ENCODE measurements at regions of chr2 and their contacts with region 1.

Region 1: GRCh38 chr2:222714361-222715241 is 43.1 kb downstream of the MOGAT1 start:
- DNase-seq: peak in 4 of 5 donors; percentile 46 to 69 (median 60)
- ATAC-seq: peak; percentile 89 to 96 (median 94)
- H3K4me3 ChIP-seq: no peak overlapping the region
- H3K27ac ChIP-seq: peak overlapping the region; percentile 39 to 83 (median 70)
- H3K4me1 ChIP-seq: peaks cover 0 to 23% (median 14%) of the 10 kb centered on the region in 12 donors
- H3K27me3 ChIP-seq: no peaks in the 10 kb centered on the region
- CTCF ChIP-seq: no peak
- POLR2A ChIP-seq: no peak

Region 2: GRCh38 chr2:222483513-222484039 is 231.0 kb before region 1 on chr2:
- intact Hi-C with region 1: no loop called
- DNase-seq: peak in 1 of 5 donors; percentile 31
- ATAC-seq: no peak
- H3K4me3 ChIP-seq: no peak overlapping the region
- H3K27ac ChIP-seq: no peak overlapping the region
- H3K4me1 ChIP-seq: peaks cover 0 to 27% (median 5%) of the 10 kb centered on the region in 12 donors
- H3K27me3 ChIP-seq: peaks cover 0 to 6% (median 0%) of the 10 kb centered on the region in 9 donors
- CTCF ChIP-seq: no peak
- POLR2A ChIP-seq: no peak

Region 3: DNA sequence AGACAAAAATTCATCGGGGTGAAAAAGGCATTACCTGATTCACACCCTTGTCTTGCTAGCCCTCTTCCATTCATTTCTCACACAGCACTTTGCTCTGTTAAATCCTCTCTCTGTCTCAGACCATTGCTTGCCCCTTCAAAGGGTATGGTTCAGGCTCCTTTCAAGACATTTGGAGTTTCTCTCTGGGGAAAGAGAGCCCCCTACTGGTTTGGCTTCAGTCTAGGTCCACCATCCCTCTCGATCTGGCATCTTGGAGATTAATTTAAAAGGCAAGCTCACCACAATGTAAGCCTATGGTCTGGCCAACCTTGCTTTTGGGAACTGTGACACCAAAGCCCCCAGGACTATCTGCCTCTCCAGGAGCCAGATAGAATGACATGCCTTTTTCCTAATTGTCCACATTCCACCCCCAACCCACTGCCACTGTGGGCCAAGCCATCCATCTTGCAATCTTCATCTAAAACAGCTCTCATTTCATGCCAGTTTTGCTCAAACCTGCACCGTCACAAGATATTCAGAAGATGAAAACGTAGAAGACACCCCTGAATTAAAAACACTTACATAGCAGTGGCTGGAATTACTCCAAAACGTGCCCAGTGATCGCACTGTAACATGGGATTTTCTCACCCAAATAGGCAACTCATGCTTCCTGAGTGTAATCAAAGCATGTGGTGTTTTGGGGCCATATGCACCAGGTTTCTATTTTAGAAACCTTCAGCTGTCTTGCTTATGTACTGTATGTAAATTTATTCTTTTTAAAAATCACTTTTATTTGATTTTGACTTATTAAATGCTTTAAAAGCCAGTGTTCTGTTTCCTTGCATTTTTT is 152.6 kb before region 1 on chr2:
- intact Hi-C with region 1: no loop called
- DNase-seq: peak in 2 of 5 donors; percentile 29 to 40
- ATAC-seq: peak; percentile 38 to 83 (median 80)
- H3K4me3 ChIP-seq: no peak overlapping the region
- H3K27ac ChIP-seq: no peak overlapping the region
- H3K4me1 ChIP-seq: peaks cover 0 to 11% (median 0%) of the 10 kb centered on the region in 12 donors
- H3K27me3 ChIP-seq: peaks cover 0 to 2% (median 0%) of the 10 kb centered on the region in 9 donors
- CTCF ChIP-seq: peak; percentile 52 to 68 (median 58)
- POLR2A ChIP-seq: no peak

Region 4: DNA sequence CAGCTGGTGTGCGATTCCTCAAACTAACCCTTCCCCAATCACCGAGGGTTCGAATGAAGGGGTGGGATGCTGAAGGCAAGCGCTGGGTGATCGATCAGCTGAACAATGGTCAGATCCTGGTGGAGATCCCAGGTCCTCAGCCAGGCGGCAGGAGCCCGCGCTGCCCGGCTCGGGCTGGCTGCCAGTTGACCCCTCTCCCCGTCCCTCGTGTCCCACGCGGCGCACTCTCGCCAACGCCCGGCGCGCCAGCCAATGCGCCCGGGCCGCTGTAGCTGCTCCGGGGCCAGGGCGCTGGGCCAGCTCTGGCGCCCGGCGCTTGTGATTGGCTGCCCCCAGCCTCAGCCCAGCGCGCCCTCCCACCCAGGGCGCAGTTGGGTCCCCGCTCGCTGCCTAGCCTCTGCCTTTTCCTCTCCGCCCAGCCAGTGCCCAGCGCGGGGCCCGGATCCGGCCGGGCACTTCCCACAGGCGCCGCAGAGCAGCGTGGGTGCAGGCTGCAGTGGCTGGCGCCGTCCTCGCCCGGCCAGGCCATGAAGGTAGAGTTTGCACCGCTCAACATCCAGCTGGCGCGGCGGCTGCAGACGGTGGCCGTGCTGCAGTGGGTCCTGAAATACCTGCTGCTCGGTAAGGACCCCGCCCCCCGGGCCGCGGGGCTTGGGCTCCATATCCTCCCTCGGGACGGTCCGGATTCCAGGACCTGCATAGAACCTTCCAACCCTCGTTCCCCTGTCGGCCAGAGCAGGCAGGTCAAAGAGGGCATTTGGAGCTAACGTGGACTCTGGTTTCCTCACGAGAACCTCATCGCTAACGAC is 43.1 kb before region 1 on chr2 and contains the start of gene MOGAT1:
- intact Hi-C with region 1: no loop called
- DNase-seq: peak; percentile 22 to 76 (median 59)
- ATAC-seq: peak; percentile 66 to 91 (median 84)
- H3K4me3 ChIP-seq: peak within 1 kb of the TSS in 11 of 12 donors; percentile 23 to 64 (median 55)
- H3K27ac ChIP-seq: peak within 1 kb of the TSS in 3 of 12 donors; percentile 32 to 63 (median 51)
- H3K4me1 ChIP-seq: peaks cover 0 to 25% (median 5%) of the 10 kb centered on the region in 12 donors
- H3K27me3 ChIP-seq: peaks cover 0 to 22% (median 4%) of the 10 kb centered on the region in 9 donors
- CTCF ChIP-seq: no peak
- POLR2A ChIP-seq: peak in 1 of 2 donors; percentile 15
- total RNA-seq, gene MOGAT1: 0.29 to 1.1 (median 0.41) TPM in 8 of 9 donors, not detected in the other

Region 5: GRCh38 chr2:222753251-222753824 is 38.7 kb after region 1 on chr2:
- intact Hi-C with region 1: loop called in 6 of 10 experiments (anchors 1 to 5 kb)
- DNase-seq: peak in 4 of 5 donors; percentile 46 to 72 (median 53)
- ATAC-seq: peak; percentile 95 to 97 (median 96)
- H3K4me3 ChIP-seq: no peak overlapping the region
- H3K27ac ChIP-seq: peak overlapping the region in 11 of 12 donors; percentile 5 to 66 (median 38)
- H3K4me1 ChIP-seq: peaks cover 0 to 30% (median 19%) of the 10 kb centered on the region in 12 donors
- H3K27me3 ChIP-seq: no peaks in the 10 kb centered on the region
- CTCF ChIP-seq: no peak
- POLR2A ChIP-seq: no peak

Region 6: DNA sequence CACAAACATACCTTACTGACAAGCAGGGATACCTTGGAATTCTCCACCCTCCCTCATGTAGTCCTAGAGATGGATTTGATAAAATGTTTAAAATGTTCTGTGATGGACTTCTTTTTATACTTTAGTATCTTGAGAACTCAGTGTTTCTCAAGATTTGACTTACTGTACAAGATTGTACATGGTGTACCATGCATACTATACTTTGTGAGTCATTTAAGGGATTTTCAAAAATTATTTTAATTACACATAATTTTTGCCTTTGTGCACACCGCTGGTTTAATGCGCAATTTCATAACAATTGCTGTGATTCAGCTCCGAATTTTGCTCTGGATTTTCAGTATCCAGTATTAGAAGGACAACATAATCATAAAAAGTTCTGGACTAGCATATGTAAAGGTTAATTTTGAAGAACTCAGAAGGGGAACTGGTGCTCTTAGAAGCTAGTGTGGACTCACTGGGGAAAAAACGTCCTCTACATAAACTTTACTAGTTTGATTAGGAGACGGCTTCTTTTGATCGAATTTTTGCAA is 67.7 kb after region 1 on chr2:
- intact Hi-C with region 1: loop called in 1 of 10 experiments (anchors 10 kb)
- DNase-seq: no peak
- ATAC-seq: no peak
- H3K4me3 ChIP-seq: no peak overlapping the region
- H3K27ac ChIP-seq: no peak overlapping the region
- H3K4me1 ChIP-seq: no peaks in the 10 kb centered on the region
- H3K27me3 ChIP-seq: no peaks in the 10 kb centered on the region
- CTCF ChIP-seq: no peak
- POLR2A ChIP-seq: no peak

Region 7: GRCh38 chr2:222792001-222792611 is 77.5 kb after region 1 on chr2:
- intact Hi-C with region 1: loop called in 7 of 10 experiments (anchors 1 to 10 kb)
- DNase-seq: peak; percentile 50 to 79 (median 70)
- ATAC-seq: peak; percentile 91 to 95 (median 92)
- H3K4me3 ChIP-seq: peak overlapping the region in 2 of 12 donors; percentile 2 to 11
- H3K27ac ChIP-seq: peak overlapping the region; percentile 50 to 91 (median 75)
- H3K4me1 ChIP-seq: peaks cover 0 to 57% (median 40%) of the 10 kb centered on the region in 12 donors
- H3K27me3 ChIP-seq: no peaks in the 10 kb centered on the region
- CTCF ChIP-seq: no peak
- POLR2A ChIP-seq: peak in 1 of 2 donors; percentile 27

Region 8: DNA sequence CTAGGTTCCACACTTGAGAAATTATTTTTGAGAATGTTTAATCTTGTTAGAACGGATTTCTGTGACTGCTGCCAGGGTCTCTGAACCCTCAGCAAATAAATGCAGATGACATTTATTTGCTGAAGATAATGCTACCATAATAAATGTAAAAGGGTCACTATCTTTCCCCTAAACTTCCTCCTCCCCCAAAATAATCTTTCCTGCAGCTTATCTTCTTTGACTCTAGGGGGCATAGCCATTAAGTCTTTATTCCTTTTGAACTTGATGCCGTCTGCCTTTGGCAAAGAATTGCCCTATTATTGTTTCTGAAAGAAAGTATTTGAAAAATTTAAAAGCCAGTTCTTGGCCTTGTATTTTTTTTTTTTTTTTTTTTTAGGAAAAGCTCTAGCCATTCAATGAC is 82.7 kb after region 1 on chr2:
- intact Hi-C with region 1: loop called in 7 of 10 experiments (anchors 1 to 10 kb)
- DNase-seq: no peak
- ATAC-seq: peak in 1 of 4 donors; percentile 42
- H3K4me3 ChIP-seq: no peak overlapping the region
- H3K27ac ChIP-seq: peak overlapping the region in 5 of 12 donors; percentile 19 to 61 (median 30)
- H3K4me1 ChIP-seq: peaks cover 0 to 37% (median 23%) of the 10 kb centered on the region in 12 donors
- H3K27me3 ChIP-seq: no peaks in the 10 kb centered on the region
- CTCF ChIP-seq: peak in 10 of 12 donors; percentile 28 to 55 (median 46)
- POLR2A ChIP-seq: no peak